ENCODE measurements at regions of chr20 and their contacts with region 1.

Region 1: GRCh38 chr20:645318-646106 is 7.5 kb downstream of the SRXN1 start:
- DNase-seq: peak in 9 of 10 donors; percentile 41 to 85 (median 62)
- H3K4me3 ChIP-seq: peak overlapping the region in 3 of 59 donors; percentile 0 to 23 (median 6)
- H3K27ac ChIP-seq: peak overlapping the region in 27 of 59 donors; percentile 1 to 70 (median 34)
- H3K27me3 ChIP-seq: no peaks in the 10 kb centered on the region
- CTCF ChIP-seq: peak; percentile 89 to 99 (median 96)

Region 2: DNA sequence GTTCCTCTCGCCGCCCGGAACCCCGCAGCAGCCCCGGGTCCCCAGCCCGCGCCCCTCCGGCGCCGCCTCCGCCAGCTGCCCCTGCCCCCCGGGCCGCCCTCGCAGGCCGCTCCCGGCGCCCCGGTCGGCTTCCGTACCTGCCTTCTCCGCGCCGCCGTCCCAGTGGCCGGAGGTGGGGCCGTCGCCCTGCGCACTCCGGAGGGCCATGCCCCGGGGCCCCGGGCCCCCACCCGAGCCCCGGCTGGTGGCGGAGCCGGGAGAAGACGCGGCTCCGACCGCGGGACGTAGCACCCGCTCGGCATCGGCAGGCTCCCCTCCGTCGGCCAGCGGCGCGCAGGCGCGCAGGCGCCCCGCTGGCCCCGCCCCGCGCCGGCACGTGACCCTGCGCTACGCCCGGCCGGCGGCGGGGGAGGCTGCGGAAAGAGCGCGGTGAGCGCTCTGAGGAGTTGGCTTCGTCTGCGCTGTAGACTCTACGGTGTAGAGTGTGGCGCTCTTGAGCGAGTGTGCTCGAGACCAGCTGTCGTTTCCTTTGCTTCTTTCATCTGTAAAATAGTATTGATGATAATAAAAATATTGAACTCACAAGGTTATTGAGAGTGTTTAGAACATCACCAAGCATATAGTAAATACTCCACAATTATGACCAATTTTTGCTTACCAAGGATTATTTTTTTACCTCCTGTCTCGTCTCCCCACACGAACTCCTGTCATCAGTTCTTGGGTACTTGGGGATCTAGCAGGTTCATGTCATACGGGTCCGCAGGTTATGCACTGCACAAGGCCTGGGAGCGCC is 183.1 kb before region 1 on chr20 and contains the start of gene TBC1D20:
- intact Hi-C with region 1: loop called in 1 of 2 experiments (anchors 10 kb)
- DNase-seq: peak; percentile 62 to 88 (median 84)
- H3K4me3 ChIP-seq: peak within 1 kb of the TSS; percentile 59 to 97 (median 88)
- H3K27ac ChIP-seq: peak within 1 kb of the TSS; percentile 48 to 97 (median 87)
- H3K27me3 ChIP-seq: no peaks in the 10 kb centered on the region
- CTCF ChIP-seq: peak in 51 of 56 donors; percentile 18 to 70 (median 50)
- total RNA-seq, gene TBC1D20: 29.0 to 51.1 (median 39.1) TPM

Region 3: GRCh38 chr20:561437-562231 is 83.9 kb before region 1 on chr20:
- intact Hi-C with region 1: loop called (anchors 2 to 5 kb)
- DNase-seq: peak in 8 of 10 donors; percentile 56 to 81 (median 71)
- H3K4me3 ChIP-seq: no peak overlapping the region
- H3K27ac ChIP-seq: no peak overlapping the region
- H3K27me3 ChIP-seq: peaks cover 0 to 6% (median 0%) of the 10 kb centered on the region in 45 donors
- CTCF ChIP-seq: peak; percentile 84 to 99 (median 95)

Region 4: DNA sequence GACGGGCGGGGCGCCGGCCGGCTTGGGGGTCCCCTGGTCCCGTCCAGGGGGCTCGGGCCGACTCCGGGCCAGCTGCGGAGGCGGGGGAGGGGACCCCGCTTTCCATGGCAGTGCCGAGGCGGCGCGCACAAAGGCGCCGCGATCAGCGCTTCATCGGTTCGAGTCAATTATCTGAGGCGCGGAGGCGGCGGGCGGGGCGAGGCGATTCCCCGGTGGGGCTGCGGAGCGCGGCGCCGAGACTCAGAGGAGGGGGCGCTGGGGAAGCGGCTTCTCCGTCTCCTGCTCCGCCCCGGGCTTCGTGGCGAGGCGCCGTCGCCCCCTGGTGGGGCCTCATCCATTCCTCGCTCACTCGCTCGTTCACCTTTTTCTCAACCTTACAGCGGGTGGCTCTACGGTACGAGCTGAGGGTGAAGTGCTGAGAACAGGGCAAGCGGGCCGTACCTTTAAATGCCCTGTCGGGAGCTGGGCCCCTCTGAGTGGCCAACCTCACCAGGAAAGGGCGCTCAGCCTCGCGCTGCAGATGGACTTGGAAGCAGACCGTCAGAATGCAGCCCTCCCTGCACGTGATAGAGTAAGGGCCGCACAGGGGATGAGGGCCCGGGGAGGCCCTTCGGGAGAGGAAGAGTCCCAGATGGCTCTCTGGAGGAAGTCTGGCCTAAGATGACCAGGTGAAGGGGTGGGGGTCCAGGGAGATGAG is 82.9 kb after region 1 on chr20:
- intact Hi-C with region 1: loop called (anchors 5 to 10 kb)
- DNase-seq: peak in 8 of 10 donors; percentile 21 to 74 (median 64)
- H3K4me3 ChIP-seq: peak overlapping the region; percentile 8 to 74 (median 60)
- H3K27ac ChIP-seq: peak overlapping the region in 3 of 59 donors; percentile 44 to 68 (median 46)
- H3K27me3 ChIP-seq: peaks cover 0 to 57% (median 10%) of the 10 kb centered on the region in 45 donors
- CTCF ChIP-seq: peak; percentile 17 to 73 (median 61)